HAP-1 (cell line): ENCODE measurements at regions of chr6 and their contacts with region 1.

Region 1: DNA sequence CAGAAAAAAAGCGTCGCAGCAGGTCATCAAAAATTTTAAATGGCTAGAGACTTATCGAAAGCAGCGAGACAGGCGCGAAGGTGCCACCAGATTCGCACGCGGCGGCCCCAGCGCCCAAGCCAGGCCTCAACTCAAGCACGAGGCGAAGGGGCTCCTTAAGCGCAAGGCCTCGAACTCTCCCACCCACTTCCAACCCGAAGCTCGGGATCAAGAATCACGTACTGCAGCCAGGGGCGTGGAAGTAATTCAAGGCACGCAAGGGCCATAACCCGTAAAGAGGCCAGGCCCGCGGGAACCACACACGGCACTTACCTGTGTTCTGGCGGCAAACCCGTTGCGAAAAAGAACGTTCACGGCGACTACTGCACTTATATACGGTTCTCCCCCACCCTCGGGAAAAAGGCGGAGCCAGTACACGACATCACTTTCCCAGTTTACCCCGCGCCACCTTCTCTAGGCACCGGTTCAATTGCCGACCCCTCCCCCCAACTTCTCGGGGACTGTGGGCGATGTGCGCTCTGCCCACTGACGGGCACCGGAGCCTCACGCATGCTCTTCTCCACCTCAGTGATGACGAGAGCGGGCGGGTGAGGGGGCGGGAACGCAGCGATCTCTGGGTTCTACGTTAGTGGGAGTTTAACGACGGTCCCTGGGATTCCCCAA is at the start of gene EEF1A1:
- DNase-seq: peak; percentile 99 to 100
- H3K4me3 ChIP-seq: peak within 1 kb of the TSS; percentile 99
- H3K4me1 ChIP-seq: peaks cover 27% of the 10 kb centered on the region
- H3K27me3 ChIP-seq: no peaks in the 10 kb centered on the region

Region 2: DNA sequence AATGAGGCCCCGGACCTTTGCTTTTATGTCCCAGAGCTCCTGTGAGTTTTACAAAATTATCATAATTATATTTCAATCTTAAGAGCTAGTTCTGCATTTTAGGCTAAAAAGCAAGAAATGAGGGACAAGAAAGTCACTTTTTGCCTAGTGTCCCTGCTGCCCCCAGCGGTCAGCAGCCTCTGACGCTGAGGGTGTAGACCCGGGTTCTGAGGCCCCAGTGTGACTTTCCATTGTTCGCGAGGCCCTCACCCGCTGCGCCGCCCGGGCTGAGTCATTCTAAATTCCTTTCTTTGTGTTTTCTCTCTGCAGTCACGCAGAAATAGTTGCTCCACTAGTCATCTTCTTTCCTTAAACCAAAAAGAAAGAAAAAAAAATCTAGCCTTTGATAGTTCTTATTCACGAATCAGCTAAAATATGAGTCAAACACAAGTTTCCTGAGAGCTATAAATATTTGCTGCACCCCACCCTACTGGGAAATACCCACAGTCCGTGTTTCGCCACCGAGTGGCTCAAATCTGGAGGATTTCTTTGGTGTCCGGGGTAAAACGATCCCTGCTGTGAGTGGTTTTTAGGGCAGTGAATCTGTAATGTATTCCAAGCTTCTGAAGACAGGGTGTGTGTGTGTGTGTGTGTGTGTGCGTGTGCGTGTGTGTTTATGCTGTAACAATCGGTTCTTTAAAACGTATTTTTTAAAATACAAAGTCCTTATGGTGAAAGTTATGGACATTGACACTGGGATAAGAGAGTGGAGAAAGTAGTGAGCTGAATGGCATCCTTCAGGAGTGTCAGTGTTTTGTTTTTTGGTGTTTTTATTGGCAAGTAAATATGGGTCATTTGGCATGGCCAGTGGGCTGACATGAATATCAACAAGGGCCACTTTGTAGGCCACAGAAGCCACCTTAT is 59.7 kb after region 1 on chr6:
- in situ Hi-C with region 1: loop called (anchors 10 kb)
- DNase-seq: peak; percentile 93 to 96
- H3K4me3 ChIP-seq: peak overlapping the region; percentile 12
- H3K4me1 ChIP-seq: peaks cover 65% of the 10 kb centered on the region
- H3K27me3 ChIP-seq: no peaks in the 10 kb centered on the region

Region 3: DNA sequence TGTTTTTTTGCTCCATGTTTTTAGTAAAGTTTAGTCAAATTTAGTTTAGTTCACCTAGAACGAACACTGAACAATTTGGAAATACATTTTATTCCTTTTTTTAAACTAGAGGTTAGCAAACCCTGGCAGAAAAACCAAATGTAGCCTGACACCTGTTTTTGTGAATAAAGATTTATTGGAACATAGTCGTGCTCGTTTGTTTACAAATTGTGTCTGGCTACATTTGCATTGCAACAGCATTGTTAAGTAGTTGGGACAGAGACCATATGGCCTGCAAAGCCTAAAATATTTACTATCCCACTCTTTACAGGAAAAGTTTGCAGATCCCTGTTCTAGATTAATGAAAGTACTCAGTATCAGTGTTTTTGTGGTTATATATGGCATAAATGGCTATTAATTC is 232.1 kb after region 1 on chr6:
- in situ Hi-C with region 1: no loop called
- DNase-seq: no peak
- H3K4me3 ChIP-seq: no peak overlapping the region
- H3K4me1 ChIP-seq: no peaks in the 10 kb centered on the region
- H3K27me3 ChIP-seq: no peaks in the 10 kb centered on the region

Region 4: DNA sequence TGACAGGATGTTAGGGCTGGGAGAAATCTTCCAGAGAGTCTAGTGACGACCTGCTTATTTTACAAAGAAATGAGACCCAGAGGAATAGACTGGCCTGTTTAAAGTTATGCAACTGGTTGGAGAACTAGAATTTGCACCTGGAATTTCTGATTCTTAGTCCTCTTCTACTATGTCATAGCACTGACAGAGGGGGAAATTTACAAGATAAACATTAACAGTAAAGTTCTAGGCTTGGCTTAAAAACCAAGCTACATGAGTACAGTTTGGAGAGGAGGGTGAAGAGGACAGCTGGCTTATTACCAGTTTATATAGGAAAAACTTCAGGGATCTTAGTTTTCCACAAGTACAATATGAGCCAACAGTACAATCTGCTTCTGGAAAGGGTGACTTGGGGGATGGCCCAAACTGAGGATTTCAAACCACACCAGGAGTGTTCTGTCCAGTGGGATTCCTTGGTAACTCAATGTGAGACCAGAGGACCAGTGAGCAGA is 444.8 kb after region 1 on chr6:
- in situ Hi-C with region 1: no loop called
- DNase-seq: no peak
- H3K4me3 ChIP-seq: no peak overlapping the region
- H3K4me1 ChIP-seq: no peaks in the 10 kb centered on the region
- H3K27me3 ChIP-seq: peaks cover 7% of the 10 kb centered on the region; the same call in 1 of the 2 replicates

Region 5: DNA sequence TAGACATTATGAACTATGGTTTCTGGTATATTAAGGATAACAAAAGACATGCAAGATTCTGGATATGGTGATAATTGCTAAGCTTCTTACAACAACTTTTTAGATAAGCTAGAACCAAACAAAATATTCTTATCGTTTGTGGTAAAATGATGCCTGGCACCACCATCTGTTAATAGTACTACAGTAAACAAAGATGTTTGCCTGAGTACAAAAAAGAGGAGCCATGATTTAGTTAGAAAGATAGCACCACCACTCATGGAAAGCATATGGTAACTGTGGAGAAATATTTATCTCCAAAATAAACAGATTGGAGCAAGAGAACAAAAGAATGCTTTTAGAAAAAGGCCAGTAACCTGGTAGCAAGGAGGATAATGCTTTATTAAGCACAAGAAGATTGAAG is 937.8 kb after region 1 on chr6:
- in situ Hi-C with region 1: no loop called
- DNase-seq: no peak
- H3K4me3 ChIP-seq: no peak overlapping the region
- H3K4me1 ChIP-seq: no peaks in the 10 kb centered on the region
- H3K27me3 ChIP-seq: no peaks in the 10 kb centered on the region